ENCODE measurements at regions of chr1 and their contacts with region 1.

Region 1: GRCh38 chr1:170729225-170730002 is 65.5 kb downstream of the PRRX1 start:
- DNase-seq: no peak
- ATAC-seq: peak; percentile 39 to 89

Region 2: GRCh38 chr1:170698301-170699275 is 30.8 kb before region 1 on chr1:
- intact Hi-C with region 1: loop called in 1 of 2 experiments (anchors 5 kb)
- DNase-seq: no peak
- ATAC-seq: peak; percentile 81 to 85